ENCODE measurements at regions of chr14 and their contacts with region 1.

Region 1: DNA sequence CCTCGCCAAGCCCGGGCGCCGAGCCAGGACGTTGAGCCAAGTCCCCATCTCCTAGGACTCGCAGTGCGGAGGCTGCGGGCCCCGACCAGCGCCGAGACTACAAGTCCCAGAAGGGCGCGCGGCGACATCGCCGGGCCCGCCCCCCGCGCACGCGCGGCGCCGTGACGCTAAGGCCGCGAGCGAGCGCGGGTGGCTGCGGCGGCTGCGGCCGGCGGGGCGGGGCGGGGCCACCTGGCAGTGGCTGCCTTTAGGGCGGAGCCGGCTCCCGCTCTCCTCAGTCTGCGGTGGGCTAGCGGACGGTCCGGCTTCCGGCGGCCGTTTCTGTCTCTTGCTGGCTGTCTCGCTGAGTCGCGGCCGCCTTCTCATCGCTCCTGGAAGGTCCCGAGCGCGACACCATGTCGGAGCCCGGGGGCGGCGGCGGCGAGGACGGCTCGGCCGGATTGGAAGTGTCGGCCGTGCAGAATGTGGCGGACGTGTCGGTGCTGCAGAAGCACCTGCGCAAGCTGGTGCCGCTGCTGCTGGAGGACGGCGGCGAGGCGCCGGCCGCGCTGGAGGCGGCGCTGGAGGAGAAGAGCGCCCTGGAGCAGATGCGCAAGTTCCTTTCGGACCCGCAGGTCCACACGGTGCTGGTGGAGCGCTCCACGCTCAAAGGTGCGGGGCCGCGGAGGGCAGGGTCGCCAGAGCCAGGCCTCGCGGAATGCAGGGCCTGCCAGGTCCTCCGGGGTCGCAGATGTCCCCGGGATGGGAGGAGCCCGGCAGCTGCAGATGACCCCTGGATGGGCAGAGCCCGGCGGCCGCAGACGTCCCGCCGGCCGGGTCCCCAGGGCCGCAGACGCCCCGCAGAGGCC is at the start of gene DYNC1H1:
- DNase-seq: peak; percentile 84 to 93
- H3K4me3 ChIP-seq: peak within 1 kb of the TSS; percentile 84
- H3K4me3 Mint-ChIP-seq: peak within 1 kb of the TSS; percentile 79
- H3K27ac Mint-ChIP-seq: peak within 1 kb of the TSS; percentile 42
- H3K4me1 ChIP-seq: peaks cover 21% of the 10 kb centered on the region
- H3K4me1 Mint-ChIP-seq: peaks cover 12% of the 10 kb centered on the region
- H3K27me3 ChIP-seq: no peaks in the 10 kb centered on the region
- H3K27me3 Mint-ChIP-seq: no peaks in the 10 kb centered on the region
- CTCF ChIP-seq: no peak
- total RNA-seq, gene DYNC1H1: 349 and 351 TPM in 2 replicates

Region 2: GRCh38 chr14:101635749-101636560 is 328.6 kb before region 1 on chr14:
- CTCF ChIA-PET with region 1: no interaction called
- POLR2A ChIA-PET with region 1: no interaction called
- intact Hi-C with region 1: no loop called
- DNase-seq: no peak
- H3K4me3 ChIP-seq: no peak overlapping the region
- H3K4me3 Mint-ChIP-seq: no peak overlapping the region
- H3K27ac Mint-ChIP-seq: no peak overlapping the region
- H3K4me1 ChIP-seq: no peaks in the 10 kb centered on the region
- H3K4me1 Mint-ChIP-seq: no peaks in the 10 kb centered on the region
- H3K27me3 ChIP-seq: no peaks in the 10 kb centered on the region
- H3K27me3 Mint-ChIP-seq: peaks cover 11% of the 10 kb centered on the region
- CTCF ChIP-seq: no peak

Region 3: DNA sequence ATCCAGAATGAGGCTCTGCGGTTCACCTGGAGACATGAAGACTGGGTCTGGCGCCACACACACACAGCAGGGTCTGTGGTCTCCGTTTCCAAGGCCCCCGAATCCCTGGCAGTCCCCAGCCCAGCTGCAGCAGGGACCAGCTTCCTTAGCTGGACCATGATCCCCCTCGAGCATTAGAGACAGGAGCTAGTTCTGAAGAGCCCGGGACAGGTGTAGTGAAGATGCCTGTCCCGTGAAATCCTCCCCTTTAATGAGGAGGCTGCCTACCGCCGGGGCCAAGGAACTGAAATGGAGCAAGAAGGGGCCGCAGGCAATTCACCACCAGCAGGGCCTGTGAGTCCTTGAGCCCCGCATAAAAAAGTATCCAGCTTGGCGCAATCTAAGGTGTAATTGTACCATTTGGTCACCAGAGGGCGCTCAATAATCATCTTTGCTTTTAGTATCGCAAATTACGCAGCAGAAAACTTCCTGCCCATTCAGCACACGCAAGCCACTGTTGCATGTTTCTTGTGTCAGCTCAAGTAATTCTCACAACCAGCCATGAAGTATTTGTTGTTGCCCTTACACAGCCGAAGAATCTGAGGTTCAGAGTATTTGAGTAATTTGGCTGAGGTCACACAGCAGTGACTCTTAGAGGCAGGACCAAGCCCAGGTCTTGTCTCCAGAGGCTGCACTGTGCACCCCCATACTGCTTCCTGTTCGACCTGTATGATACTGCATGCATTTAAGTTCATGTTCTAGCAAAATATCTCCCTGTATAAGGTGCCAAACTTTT is 257.3 kb before region 1 on chr14:
- CTCF ChIA-PET with region 1: interaction called, 3 read pairs
- POLR2A ChIA-PET with region 1: no interaction called
- intact Hi-C with region 1: loop called (anchors 5 kb)
- DNase-seq: peak; percentile 50 to 72
- H3K4me3 ChIP-seq: no peak overlapping the region
- H3K4me3 Mint-ChIP-seq: no peak overlapping the region
- H3K27ac Mint-ChIP-seq: no peak overlapping the region
- H3K4me1 ChIP-seq: 0 out of 2 replicates have a peak, but pooled peaks cover 4% of the 10 kb centered on the region
- H3K4me1 Mint-ChIP-seq: no peaks in the 10 kb centered on the region
- H3K27me3 ChIP-seq: no peaks in the 10 kb centered on the region
- H3K27me3 Mint-ChIP-seq: peaks cover 4% of the 10 kb centered on the region
- CTCF ChIP-seq: peak; percentile 60 to 82

Region 4: GRCh38 chr14:102071283-102071998 is 106.9 kb after region 1 on chr14:
- CTCF ChIA-PET with region 1: no interaction called
- POLR2A ChIA-PET with region 1: interaction called, 11 read pairs
- intact Hi-C with region 1: no loop called
- DNase-seq: no peak
- H3K4me3 ChIP-seq: no peak overlapping the region
- H3K4me3 Mint-ChIP-seq: no peak overlapping the region
- H3K27ac Mint-ChIP-seq: no peak overlapping the region
- H3K4me1 ChIP-seq: no peaks in the 10 kb centered on the region
- H3K4me1 Mint-ChIP-seq: peaks cover 6% of the 10 kb centered on the region
- H3K27me3 ChIP-seq: no peaks in the 10 kb centered on the region
- H3K27me3 Mint-ChIP-seq: no peaks in the 10 kb centered on the region
- CTCF ChIP-seq: no peak